Activated B cell treated with CpG ODN at 0.5 μM for 24 hours (primary cell): ENCODE measurements at regions of chr7 and their contacts with region 1.

Region 1: DNA sequence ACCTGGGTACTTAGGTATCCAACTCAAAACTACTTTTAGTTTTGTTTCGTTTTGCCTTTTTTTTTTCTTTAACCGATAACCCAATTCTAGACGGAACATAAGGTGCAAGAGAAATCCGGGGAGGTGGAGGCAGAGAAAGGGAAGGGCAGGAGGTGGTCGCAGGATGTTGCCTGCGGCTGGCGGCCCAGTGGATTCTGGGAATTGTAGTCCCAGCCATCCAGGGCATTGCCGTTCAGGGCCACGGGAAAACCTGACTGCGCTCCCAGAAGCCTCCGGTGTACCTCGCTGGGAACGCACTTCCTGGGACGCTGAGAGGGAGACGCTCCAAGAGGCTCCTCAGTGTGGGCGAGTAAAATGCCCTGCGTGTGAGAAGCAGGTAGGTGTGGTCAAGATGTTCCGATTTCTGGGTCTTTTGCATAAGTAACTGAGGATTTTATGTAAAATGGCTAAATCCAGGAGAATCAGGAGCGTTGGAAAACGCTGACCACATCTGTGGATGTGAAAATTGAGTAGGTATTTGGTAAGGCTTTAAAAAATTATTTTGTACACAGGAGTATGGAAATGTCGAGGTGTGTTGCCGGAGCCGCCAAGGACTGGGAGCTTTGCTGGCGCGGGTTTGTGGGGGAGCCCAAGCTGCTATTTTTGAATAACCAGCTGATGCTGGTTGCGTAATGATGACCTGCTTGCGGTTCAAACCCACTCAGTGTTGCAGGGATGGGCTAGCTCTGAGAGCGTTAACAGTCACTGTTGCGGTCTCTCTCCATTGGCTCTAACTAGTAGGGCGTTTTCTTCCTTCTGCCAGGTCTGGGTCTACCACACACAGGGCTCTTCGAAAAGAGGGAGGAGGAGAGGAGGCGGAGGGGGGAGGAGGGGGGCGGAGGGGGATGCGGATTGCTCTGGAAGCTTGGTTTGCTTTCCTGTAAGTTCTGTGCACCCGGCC is at the start of gene CLDN12:
- DNase-seq: peak; percentile 57
- ATAC-seq: peak; percentile 94
- H3K4me3 Mint-ChIP-seq: peak within 1 kb of the TSS; percentile 97
- H3K27ac Mint-ChIP-seq: peak within 1 kb of the TSS; percentile 89
- H3K4me1 Mint-ChIP-seq: peaks cover 15% of the 10 kb centered on the region
- H3K27me3 Mint-ChIP-seq: no peaks in the 10 kb centered on the region
- CTCF ChIP-seq: no peak
- total RNA-seq, gene CLDN12: 6.2 and 9.0 TPM in 2 replicates

Region 2: DNA sequence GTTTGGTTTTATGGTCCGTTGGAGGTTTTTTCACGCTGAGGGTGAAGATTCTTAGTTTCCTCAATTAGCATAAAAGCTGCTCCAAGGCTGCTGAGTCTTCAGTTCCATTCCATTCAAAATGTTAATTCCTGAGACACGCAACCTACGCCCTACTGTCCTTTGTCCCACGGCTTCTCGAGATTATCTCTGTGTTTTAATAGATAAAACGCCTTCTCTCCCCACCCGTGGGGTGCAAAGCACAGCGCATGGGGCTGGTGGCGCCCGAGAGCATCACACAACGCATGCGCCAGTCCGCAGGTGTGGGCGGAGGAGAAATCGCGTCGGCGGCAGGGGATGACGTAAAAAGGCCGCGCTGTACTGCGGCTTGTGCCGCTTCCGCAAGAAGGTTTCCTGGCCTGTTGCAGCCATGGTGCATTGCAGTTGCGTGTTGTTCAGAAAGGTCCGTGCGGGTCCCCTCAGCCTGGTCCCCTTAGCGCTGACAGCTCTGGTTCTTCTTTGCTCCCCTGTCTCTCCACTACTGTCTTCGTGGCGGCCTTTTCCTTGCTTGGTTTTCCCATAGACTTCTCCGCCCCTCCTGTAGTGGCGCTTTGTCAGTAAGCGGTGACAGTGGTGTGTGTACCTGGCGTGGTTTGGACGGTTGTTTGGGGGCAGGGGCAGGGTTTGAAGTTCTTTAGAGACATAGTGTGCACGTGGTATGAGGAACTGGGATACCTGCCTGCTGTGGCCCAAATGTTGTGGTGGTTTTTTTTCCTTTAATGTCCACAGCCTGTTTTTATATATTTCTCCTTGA is 56.9 kb before region 1 on chr7 and contains the start of gene GTPBP10:
- CTCF ChIA-PET with region 1: interaction called, 4 read pairs
- POLR2A ChIA-PET with region 1: interaction called, 21 read pairs
- intact Hi-C with region 1: loop called (anchors 1 kb)
- DNase-seq: peak; percentile 90
- ATAC-seq: peak; percentile 97
- H3K4me3 Mint-ChIP-seq: peak within 1 kb of the TSS; percentile 96
- H3K27ac Mint-ChIP-seq: peak within 1 kb of the TSS; percentile 98
- H3K4me1 Mint-ChIP-seq: peaks cover 35% of the 10 kb centered on the region
- H3K27me3 Mint-ChIP-seq: no peaks in the 10 kb centered on the region
- CTCF ChIP-seq: peak; percentile 37
- total RNA-seq, gene GTPBP10: 28.8 and 29.5 TPM in 2 replicates